WTC11 (cell line): ENCODE measurements at regions of chr2 and their contacts with region 1.

Region 1: GRCh38 chr2:237512774-237513466 is 25.9 kb downstream of the MLPH start:
- DNase-seq: peak; percentile 92
- ATAC-seq: peak; percentile 87
- H3K4me3 Mint-ChIP-seq: no peak overlapping the region
- H3K27ac Mint-ChIP-seq: no peak overlapping the region
- H3K4me1 Mint-ChIP-seq: peaks cover 12% of the 10 kb centered on the region
- H3K27me3 Mint-ChIP-seq: no peaks in the 10 kb centered on the region; the same call in 1 of the 2 replicates
- CTCF ChIP-seq: peak; percentile 94

Region 2: DNA sequence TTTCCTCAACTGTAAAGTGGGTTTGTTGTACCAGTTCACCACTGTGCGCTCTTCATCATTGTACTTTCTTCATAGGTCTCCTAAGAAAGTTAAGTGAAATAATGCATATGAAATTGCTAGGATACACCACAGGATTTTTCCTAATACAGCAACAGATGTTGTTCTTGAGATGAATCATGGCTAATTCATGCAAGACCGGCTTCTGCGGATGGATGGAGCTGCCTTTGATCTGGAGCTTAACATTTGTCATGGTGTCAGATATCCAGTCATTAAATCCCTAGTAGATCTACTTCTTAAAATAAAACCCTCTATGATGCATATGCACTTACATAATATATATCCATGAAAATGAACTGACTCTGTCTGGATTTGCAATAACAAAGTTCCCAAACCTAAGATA is 213.0 kb before region 1 on chr2:
- CTCF ChIA-PET with region 1: no interaction called
- POLR2A ChIA-PET with region 1: no interaction called
- DNase-seq: no peak
- ATAC-seq: no peak
- H3K4me3 Mint-ChIP-seq: no peak overlapping the region
- H3K27ac Mint-ChIP-seq: no peak overlapping the region
- H3K4me1 Mint-ChIP-seq: no peaks in the 10 kb centered on the region
- H3K27me3 Mint-ChIP-seq: peaks cover 5% of the 10 kb centered on the region; the same call in 1 of the 2 replicates
- CTCF ChIP-seq: no peak

Region 3: DNA sequence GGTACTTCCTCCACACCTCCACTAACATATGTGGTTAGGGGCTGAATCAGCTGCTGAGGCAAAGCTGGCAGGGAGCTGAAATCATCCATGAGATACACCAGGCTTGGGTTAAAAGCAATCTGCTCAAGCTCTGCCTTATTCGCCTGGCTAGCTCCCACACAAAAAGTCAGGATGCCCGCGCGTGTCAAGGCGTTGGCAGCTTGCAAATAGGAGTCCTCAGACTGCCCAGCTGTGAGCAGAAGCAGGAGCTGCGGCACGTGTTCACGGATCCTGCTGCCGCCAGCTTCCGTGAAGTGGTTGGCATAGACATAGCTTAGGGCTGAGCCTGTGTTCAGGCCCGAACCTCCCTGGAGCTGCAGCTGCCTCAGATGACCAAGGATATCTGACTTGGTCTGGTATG is 134.3 kb before region 1 on chr2:
- CTCF ChIA-PET with region 1: no interaction called
- POLR2A ChIA-PET with region 1: no interaction called
- DNase-seq: no peak
- ATAC-seq: no peak
- H3K4me3 Mint-ChIP-seq: no peak overlapping the region
- H3K27ac Mint-ChIP-seq: no peak overlapping the region
- H3K4me1 Mint-ChIP-seq: no peaks in the 10 kb centered on the region
- H3K27me3 Mint-ChIP-seq: no peaks in the 10 kb centered on the region; the same call in 1 of the 2 replicates
- CTCF ChIP-seq: no peak

Region 4: GRCh38 chr2:237421542-237422116 is 91.3 kb before region 1 on chr2:
- CTCF ChIA-PET with region 1: interaction called, 27 read pairs
- POLR2A ChIA-PET with region 1: no interaction called
- DNase-seq: peak; percentile 90
- ATAC-seq: peak; percentile 98
- H3K4me3 Mint-ChIP-seq: peak overlapping the region; percentile 34; the same call in 1 of the 2 replicates
- H3K27ac Mint-ChIP-seq: no peak overlapping the region
- H3K4me1 Mint-ChIP-seq: peaks cover 9% of the 10 kb centered on the region
- H3K27me3 Mint-ChIP-seq: peaks cover 44% of the 10 kb centered on the region
- CTCF ChIP-seq: peak; percentile 69; the same call in 1 of the 2 replicates

Region 5: GRCh38 chr2:237488901-237489801 is 23.8 kb before region 1 on chr2:
- CTCF ChIA-PET with region 1: interaction called, 17 read pairs
- POLR2A ChIA-PET with region 1: interaction called, 3 read pairs
- DNase-seq: no peak
- ATAC-seq: no peak
- H3K4me3 Mint-ChIP-seq: no peak overlapping the region; the same call in 1 of the 2 replicates
- H3K27ac Mint-ChIP-seq: peak overlapping the region; percentile 3; the same call in 1 of the 2 replicates
- H3K4me1 Mint-ChIP-seq: peaks cover 39% of the 10 kb centered on the region
- H3K27me3 Mint-ChIP-seq: peaks cover 65% of the 10 kb centered on the region
- CTCF ChIP-seq: no peak

Region 6: GRCh38 chr2:237529452-237530402 is 16.8 kb after region 1 on chr2:
- CTCF ChIA-PET with region 1: interaction called, 22 read pairs
- POLR2A ChIA-PET with region 1: no interaction called
- DNase-seq: no peak
- ATAC-seq: no peak
- H3K4me3 Mint-ChIP-seq: no peak overlapping the region
- H3K27ac Mint-ChIP-seq: no peak overlapping the region
- H3K4me1 Mint-ChIP-seq: peaks cover 14% of the 10 kb centered on the region
- H3K27me3 Mint-ChIP-seq: peaks cover 6% of the 10 kb centered on the region; the same call in 1 of the 2 replicates
- CTCF ChIP-seq: no peak

Region 7: GRCh38 chr2:237566401-237567235 is 53.7 kb after region 1 on chr2 and contains the start of gene PRLH:
- CTCF ChIA-PET with region 1: interaction called, 385 read pairs
- POLR2A ChIA-PET with region 1: interaction called, 11 read pairs
- DNase-seq: no peak
- ATAC-seq: no peak
- H3K4me3 Mint-ChIP-seq: no peak within 1 kb of the TSS
- H3K27ac Mint-ChIP-seq: no peak within 1 kb of the TSS
- H3K4me1 Mint-ChIP-seq: peaks cover under 1% of the 10 kb centered on the region
- H3K27me3 Mint-ChIP-seq: no peaks in the 10 kb centered on the region
- CTCF ChIP-seq: no peak
- total RNA-seq, gene PRLH: not detected in 3 replicates

Region 8: GRCh38 chr2:237614151-237614720 is 101.3 kb after region 1 on chr2:
- CTCF ChIA-PET with region 1: interaction called, 14 read pairs
- POLR2A ChIA-PET with region 1: no interaction called
- DNase-seq: peak; percentile 82
- ATAC-seq: peak; percentile 89
- H3K4me3 Mint-ChIP-seq: 0 out of 2 replicates have a peak overlapping the region, but pooled peaks have one; percentile 2
- H3K27ac Mint-ChIP-seq: peak overlapping the region; percentile 93
- H3K4me1 Mint-ChIP-seq: peaks cover 62% of the 10 kb centered on the region
- H3K27me3 Mint-ChIP-seq: peaks cover 1% of the 10 kb centered on the region; the same call in 1 of the 2 replicates
- CTCF ChIP-seq: peak; percentile 36; the same call in 1 of the 2 replicates

Region 9: GRCh38 chr2:237744613-237745249 is 231.8 kb after region 1 on chr2:
- CTCF ChIA-PET with region 1: interaction called, 23 read pairs
- POLR2A ChIA-PET with region 1: no interaction called
- DNase-seq: peak; percentile 86
- ATAC-seq: peak; percentile 82
- H3K4me3 Mint-ChIP-seq: no peak overlapping the region
- H3K27ac Mint-ChIP-seq: peak overlapping the region; percentile 80
- H3K4me1 Mint-ChIP-seq: peaks cover 43% of the 10 kb centered on the region
- H3K27me3 Mint-ChIP-seq: no peaks in the 10 kb centered on the region
- CTCF ChIP-seq: peak; percentile 80

Region 10: GRCh38 chr2:238203094-238203972 is 690.4 kb after region 1 on chr2 and contains the start of gene ILKAP:
- CTCF ChIA-PET with region 1: no interaction called
- POLR2A ChIA-PET with region 1: no interaction called
- DNase-seq: peak; percentile 82
- ATAC-seq: peak; percentile 97
- H3K4me3 Mint-ChIP-seq: peak within 1 kb of the TSS; percentile 82
- H3K27ac Mint-ChIP-seq: no peak within 1 kb of the TSS
- H3K4me1 Mint-ChIP-seq: peaks cover 16% of the 10 kb centered on the region
- H3K27me3 Mint-ChIP-seq: peaks cover 15% of the 10 kb centered on the region
- CTCF ChIP-seq: no peak
- total RNA-seq, gene ILKAP: 26.4 to 32.7 TPM (median 26.7 TPM) in 3 replicates